ENCODE measurements at regions of chr3 and their contacts with region 1.

Region 1: GRCh38 chr3:48039487-48040190 is 23.4 kb upstream of the MAP4 start:
- DNase-seq: no peak
- H3K4me3 ChIP-seq: peak overlapping the region in 28 of 59 donors; percentile 2 to 43 (median 24)
- H3K27ac ChIP-seq: peak overlapping the region; percentile 54 to 96 (median 86)
- H3K27me3 ChIP-seq: no peaks in the 10 kb centered on the region
- CTCF ChIP-seq: no peak

Region 2: DNA sequence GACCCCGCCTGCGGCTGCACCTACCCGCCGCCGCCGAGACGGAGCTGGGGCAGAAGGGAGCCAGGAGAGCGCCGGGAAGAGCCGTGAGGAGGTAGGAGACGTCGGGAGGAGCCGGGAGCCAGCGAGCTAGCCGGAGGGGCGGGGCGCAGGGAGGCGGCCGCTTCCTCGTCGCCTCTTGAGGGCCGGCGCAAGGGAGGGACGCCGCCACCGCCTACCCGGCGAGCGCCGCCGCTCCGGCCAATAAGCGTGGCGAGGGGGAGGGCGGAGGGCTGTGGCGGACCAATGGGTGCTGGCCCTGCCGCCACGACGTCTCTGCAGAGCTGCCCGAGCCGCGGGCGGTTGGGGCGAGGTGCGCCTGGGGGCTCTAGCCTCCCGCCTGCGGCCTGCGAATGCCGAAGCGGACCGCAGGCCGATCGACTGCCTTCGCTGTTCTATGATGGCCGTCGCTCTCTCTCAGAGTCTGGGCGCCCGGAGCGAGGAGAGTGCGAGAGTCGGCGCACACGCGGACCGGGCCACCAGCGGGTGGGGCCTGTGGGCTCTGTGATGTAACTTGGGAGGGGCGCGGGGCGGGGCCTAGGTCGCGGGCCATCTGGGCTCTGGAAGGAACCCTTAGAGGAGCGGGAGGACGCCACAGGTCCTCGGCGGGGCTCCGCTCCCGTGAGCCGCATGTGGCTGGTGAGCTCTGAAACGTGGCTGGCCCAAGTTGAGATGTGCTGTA is 49.3 kb after region 1 on chr3:
- intact Hi-C with region 1: loop called in 1 of 2 experiments (anchors 5 kb)
- DNase-seq: peak; percentile 94 to 98 (median 96)
- H3K4me3 ChIP-seq: peak overlapping the region; percentile 62 to 99 (median 89)
- H3K27ac ChIP-seq: peak overlapping the region; percentile 72 to 99 (median 95)
- H3K27me3 ChIP-seq: no peaks in the 10 kb centered on the region
- CTCF ChIP-seq: peak in 16 of 56 donors; percentile 8 to 40 (median 19)